ENCODE measurements at regions of chr1 and their contacts with region 1.

Region 1: GRCh38 chr1:47432071-47433036 is 5.5 kb upstream of the FOXD2 start:
- DNase-seq: peak; percentile 56 to 72 (median 62)
- H3K4me3 ChIP-seq: peak overlapping the region in 1 of 2 donors; percentile 21
- H3K4me3 Mint-ChIP-seq: peak overlapping the region in 7 of 8 donors; percentile 44 to 81 (median 67)
- H3K27ac ChIP-seq: no peak overlapping the region
- H3K27ac Mint-ChIP-seq: peak overlapping the region in 4 of 7 donors; percentile 29 to 57 (median 40)
- H3K4me1 ChIP-seq: peaks cover 31% of the 10 kb centered on the region
- H3K4me1 Mint-ChIP-seq: peaks cover 17 to 50% (median 32%) of the 10 kb centered on the region in 4 donors
- H3K27me3 ChIP-seq: no peaks in the 10 kb centered on the region
- H3K27me3 Mint-ChIP-seq: no peaks in the 10 kb centered on the region

Region 2: GRCh38 chr1:47371016-47371517 is 61.3 kb before region 1 on chr1:
- CTCF ChIA-PET with region 1: no interaction called
- POLR2A ChIA-PET with region 1: no interaction called
- intact Hi-C with region 1: no loop called
- DNase-seq: no peak
- H3K4me3 ChIP-seq: no peak overlapping the region
- H3K4me3 Mint-ChIP-seq: no peak overlapping the region
- H3K27ac ChIP-seq: no peak overlapping the region
- H3K27ac Mint-ChIP-seq: no peak overlapping the region
- H3K4me1 ChIP-seq: no peaks in the 10 kb centered on the region
- H3K4me1 Mint-ChIP-seq: no peaks in the 10 kb centered on the region
- H3K27me3 ChIP-seq: no peaks in the 10 kb centered on the region
- H3K27me3 Mint-ChIP-seq: no peaks in the 10 kb centered on the region

Region 3: GRCh38 chr1:47418681-47419325 is 13.6 kb before region 1 on chr1:
- CTCF ChIA-PET with region 1: interaction called, 12 read pairs
- POLR2A ChIA-PET with region 1: interaction called, 3 read pairs
- intact Hi-C with region 1: no loop called
- DNase-seq: no peak
- H3K4me3 ChIP-seq: no peak overlapping the region
- H3K4me3 Mint-ChIP-seq: no peak overlapping the region
- H3K27ac ChIP-seq: no peak overlapping the region
- H3K27ac Mint-ChIP-seq: no peak overlapping the region
- H3K4me1 ChIP-seq: no peaks in the 10 kb centered on the region
- H3K4me1 Mint-ChIP-seq: peaks cover 0 to 22% (median 3%) of the 10 kb centered on the region in 4 donors
- H3K27me3 ChIP-seq: peaks cover 9% of the 10 kb centered on the region
- H3K27me3 Mint-ChIP-seq: peaks cover 33 to 34% of the 10 kb centered on the region in 2 donors

Region 4: GRCh38 chr1:47656719-47657685 is 224.6 kb after region 1 on chr1:
- CTCF ChIA-PET with region 1: no interaction called
- POLR2A ChIA-PET with region 1: no interaction called
- intact Hi-C with region 1: no loop called
- DNase-seq: no peak
- H3K4me3 ChIP-seq: no peak overlapping the region
- H3K4me3 Mint-ChIP-seq: no peak overlapping the region
- H3K27ac ChIP-seq: no peak overlapping the region
- H3K27ac Mint-ChIP-seq: no peak overlapping the region
- H3K4me1 ChIP-seq: no peaks in the 10 kb centered on the region
- H3K4me1 Mint-ChIP-seq: no peaks in the 10 kb centered on the region
- H3K27me3 ChIP-seq: no peaks in the 10 kb centered on the region
- H3K27me3 Mint-ChIP-seq: peaks cover 11 to 16% of the 10 kb centered on the region in 2 donors

Region 5: DNA sequence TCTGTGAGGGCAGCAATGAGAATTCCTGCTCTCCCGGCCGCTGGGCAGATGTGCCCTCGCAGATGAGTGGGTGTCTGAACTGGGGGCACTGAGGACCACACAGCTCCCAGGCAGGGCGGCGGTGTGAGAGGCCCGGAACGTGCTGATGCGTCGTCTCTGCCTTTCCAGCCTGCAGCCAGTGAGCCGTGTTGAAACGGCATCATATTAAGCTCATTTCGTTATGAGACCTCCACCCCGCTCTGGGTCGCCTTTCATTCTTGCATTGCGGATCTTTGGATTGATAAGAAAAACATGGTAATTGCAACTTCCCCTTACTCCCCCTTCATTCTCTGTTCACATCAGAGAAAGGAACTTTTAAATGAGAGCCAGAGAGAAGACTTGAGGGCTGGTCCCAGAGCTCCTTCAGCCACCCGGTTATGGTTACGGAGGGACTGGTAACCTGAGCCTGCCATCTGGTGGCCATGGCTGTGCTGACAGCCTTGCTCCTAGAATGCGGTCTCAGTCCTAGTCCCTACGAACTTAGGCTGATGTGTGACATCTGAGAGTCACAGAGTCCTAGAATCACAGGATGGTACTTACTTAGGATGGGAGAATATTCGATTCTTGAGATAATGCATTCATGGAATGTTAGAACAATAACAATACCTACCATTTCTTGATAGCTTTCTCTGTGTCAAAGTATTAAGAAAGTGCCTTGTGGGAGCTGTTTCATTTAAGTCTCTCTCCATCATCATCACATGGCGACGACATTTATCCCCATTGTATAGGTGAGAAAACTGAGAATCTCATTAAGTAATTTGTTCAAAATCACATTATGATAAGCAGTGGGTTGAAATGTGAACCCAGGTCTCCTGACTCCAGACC is 293.9 kb after region 1 on chr1:
- CTCF ChIA-PET with region 1: interaction called, 138 read pairs
- POLR2A ChIA-PET with region 1: interaction called, 3 read pairs
- intact Hi-C with region 1: loop called (anchors 1 kb)
- DNase-seq: peak; percentile 38 to 56 (median 48)
- H3K4me3 ChIP-seq: no peak overlapping the region
- H3K4me3 Mint-ChIP-seq: peak overlapping the region; percentile 53 to 86 (median 76)
- H3K27ac ChIP-seq: no peak overlapping the region
- H3K27ac Mint-ChIP-seq: no peak overlapping the region
- H3K4me1 ChIP-seq: peaks cover 4% of the 10 kb centered on the region
- H3K4me1 Mint-ChIP-seq: peaks cover 3 to 12% (median 9%) of the 10 kb centered on the region in 4 donors
- H3K27me3 ChIP-seq: peaks cover 12% of the 10 kb centered on the region
- H3K27me3 Mint-ChIP-seq: peaks cover 30% of the 10 kb centered on the region in 2 donors

Measured in CD4-positive, alpha-beta memory T cell (primary cell).